Dorsolateral prefrontal cortex (tissue), 120 donors: ENCODE measurements at regions of chr17 and their contacts with region 1.

Region 1: DNA sequence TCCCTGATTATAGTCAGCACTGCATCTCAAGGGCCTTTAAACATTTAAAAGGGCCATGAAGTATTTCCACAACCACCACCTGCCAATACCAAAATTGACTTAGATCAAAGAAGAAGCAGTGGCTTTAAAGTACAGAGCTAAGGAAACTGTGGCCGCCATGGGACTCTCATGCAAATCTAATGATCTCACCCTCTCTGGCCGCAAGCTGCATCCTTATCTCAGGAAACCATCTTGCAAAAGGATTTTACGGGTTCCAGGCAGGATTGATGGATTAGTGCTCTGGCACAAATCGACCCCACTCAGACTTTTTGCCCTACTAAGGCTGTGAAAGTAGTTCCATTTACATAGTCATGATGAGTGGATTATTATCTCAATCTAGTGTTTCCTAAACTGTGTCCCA is 22.6 kb downstream of the CDRT4 start:
- DNase-seq: no peak
- H3K4me3 ChIP-seq: no peak overlapping the region
- H3K27ac ChIP-seq: no peak overlapping the region
- H3K27me3 ChIP-seq: no peaks in the 10 kb centered on the region
- CTCF ChIP-seq: no peak

Region 2: GRCh38 chr17:15038656-15039055 is 406.1 kb before region 1 on chr17:
- intact Hi-C with region 1: no loop called
- DNase-seq: no peak
- H3K4me3 ChIP-seq: no peak overlapping the region
- H3K27ac ChIP-seq: no peak overlapping the region
- H3K27me3 ChIP-seq: peaks cover 0 to 38% (median 4%) of the 10 kb centered on the region in 45 donors
- CTCF ChIP-seq: no peak

Region 3: GRCh38 chr17:15377616-15378015 is 67.2 kb before region 1 on chr17:
- intact Hi-C with region 1: loop called in 1 of 2 experiments (anchors 5 kb)
- DNase-seq: peak in 4 of 10 donors; percentile 47 to 65 (median 56)
- H3K4me3 ChIP-seq: peak overlapping the region in 35 of 59 donors; percentile 3 to 55 (median 29)
- H3K27ac ChIP-seq: peak overlapping the region; percentile 14 to 93 (median 83)
- H3K27me3 ChIP-seq: no peaks in the 10 kb centered on the region
- CTCF ChIP-seq: peak in 4 of 56 donors; percentile 1 to 12 (median 6)